ENCODE measurements at regions of chr7 and their contacts with region 1.

Region 1: GRCh38 chr7:78510580-78511188 is 712.1 kb downstream of the PHTF2 start:
- DNase-seq: peak; percentile 26
- ATAC-seq: no peak
- H3K4me3 Mint-ChIP-seq: no peak overlapping the region
- H3K27ac Mint-ChIP-seq: no peak overlapping the region
- H3K4me1 Mint-ChIP-seq: no peaks in the 10 kb centered on the region
- H3K27me3 Mint-ChIP-seq: no peaks in the 10 kb centered on the region

Region 2: GRCh38 chr7:79176859-79177477 is 666.3 kb after region 1 on chr7:
- CTCF ChIA-PET with region 1: no interaction called
- POLR2A ChIA-PET with region 1: no interaction called
- intact Hi-C with region 1: loop called in 1 of 2 experiments (anchors 5 kb)
- DNase-seq: no peak
- ATAC-seq: no peak
- H3K4me3 Mint-ChIP-seq: no peak overlapping the region
- H3K27ac Mint-ChIP-seq: no peak overlapping the region
- H3K4me1 Mint-ChIP-seq: no peaks in the 10 kb centered on the region
- H3K27me3 Mint-ChIP-seq: peaks cover 2% of the 10 kb centered on the region